Caco-2 (cell line): ENCODE measurements at regions of chr16 and their contacts with region 1.

Region 1: DNA sequence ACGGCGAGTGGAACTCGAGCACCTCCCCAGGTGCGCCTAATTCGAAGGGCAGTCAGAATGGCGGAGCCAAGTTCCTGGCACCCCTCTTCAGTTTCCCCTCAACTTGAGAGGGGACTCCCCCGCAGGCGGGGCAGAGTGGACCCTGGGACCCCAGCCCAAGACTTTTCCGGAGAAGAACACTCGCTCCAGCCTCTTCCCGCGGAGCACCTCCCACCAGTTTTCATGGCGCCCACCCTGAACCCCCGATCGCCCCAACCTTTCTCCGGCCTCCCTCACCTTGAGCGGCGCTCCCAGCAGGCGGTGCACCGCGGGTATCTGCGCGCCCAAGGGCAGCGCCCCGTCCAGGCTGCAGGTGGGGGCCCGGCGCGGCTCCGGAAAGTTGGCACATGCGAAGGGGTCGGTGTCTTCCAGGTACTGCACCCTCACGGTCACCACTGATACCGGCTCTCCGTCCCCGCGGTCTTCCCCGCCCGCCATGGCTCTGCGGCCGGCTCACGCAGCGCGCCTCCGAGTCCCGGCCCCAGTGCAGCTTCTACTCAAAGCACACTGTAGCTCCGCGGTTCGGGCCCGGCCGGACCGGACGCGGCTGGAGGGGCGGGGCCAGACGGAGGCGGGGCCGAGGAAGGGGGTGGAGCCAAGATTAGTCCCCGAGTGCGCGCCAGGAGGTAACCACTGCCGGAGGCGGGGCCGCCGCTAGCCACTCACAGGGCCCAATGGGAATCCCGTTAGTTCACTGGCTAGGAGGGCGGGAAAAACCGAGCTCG is at the start of gene FHOD1:
- DNase-seq: peak; percentile 98 to 99
- H3K4me3 ChIP-seq: peak within 1 kb of the TSS; percentile 72
- H3K4me3 Mint-ChIP-seq: peak within 1 kb of the TSS; percentile 95
- H3K27ac Mint-ChIP-seq: peak within 1 kb of the TSS; percentile 87
- H3K4me1 ChIP-seq: peaks cover 27% of the 10 kb centered on the region
- H3K4me1 Mint-ChIP-seq: peaks cover 42% of the 10 kb centered on the region
- H3K27me3 ChIP-seq: peaks cover 6% of the 10 kb centered on the region
- H3K27me3 Mint-ChIP-seq: peaks cover 18% of the 10 kb centered on the region
- CTCF ChIP-seq: peak in 1 of 2 experiments; percentile 36
- total RNA-seq, gene FHOD1: 59.1 and 69.0 TPM in 2 replicates

Region 2: DNA sequence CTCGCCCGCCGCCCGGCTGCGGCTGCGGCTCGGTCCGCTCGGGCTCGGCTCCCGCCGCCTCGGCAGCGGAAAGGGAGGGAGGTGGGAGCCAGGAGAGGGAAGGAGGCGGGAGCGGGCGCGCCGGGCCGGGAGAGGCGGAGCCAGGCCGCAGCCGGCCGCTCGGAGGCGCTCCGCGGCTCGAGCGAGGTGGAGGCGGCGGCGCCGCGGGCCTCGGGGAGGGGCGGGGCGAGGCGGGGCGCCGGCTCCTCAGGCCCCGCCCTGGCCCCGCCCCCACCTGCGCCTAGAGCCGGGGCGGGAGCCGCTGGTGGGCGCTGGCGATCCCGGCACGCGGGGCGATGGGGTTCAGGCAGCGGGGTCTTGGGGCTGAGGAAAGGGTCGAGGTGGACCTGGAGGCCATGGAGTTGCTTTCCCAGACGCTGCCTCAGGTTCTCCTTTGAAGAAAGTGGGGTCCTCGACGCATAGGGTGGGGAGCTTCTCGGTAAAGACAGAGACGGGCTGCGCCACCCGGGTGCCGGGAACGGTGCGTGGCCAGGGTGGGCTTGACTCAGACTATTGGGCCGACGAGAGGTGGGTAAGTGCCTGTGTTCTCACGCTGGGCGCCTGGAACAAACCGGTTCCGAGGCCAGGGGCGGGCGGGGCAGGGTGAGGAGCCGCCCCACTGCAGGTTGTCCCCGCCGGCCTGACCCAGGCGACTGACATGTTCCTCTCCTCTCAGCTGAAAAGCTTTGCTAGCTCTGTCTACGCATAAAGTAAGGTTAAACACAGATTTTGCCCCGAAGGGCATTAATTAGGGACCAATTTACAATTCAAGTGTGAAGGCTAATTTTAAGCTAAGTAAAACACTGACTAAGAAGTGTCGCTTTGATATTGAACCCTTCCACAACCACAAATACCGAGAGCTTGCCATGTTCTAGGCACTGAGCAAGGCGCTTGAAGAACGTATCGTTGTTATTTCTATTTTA is 550.2 kb before region 1 on chr16 and contains the start of gene CMTM4:
- CTCF ChIA-PET with region 1: no interaction called
- POLR2A ChIA-PET with region 1: no interaction called
- intact Hi-C with region 1: no loop called
- DNase-seq: peak; percentile 89 to 96
- H3K4me3 ChIP-seq: peak within 1 kb of the TSS; percentile 97
- H3K4me3 Mint-ChIP-seq: peak within 1 kb of the TSS; percentile 94
- H3K27ac Mint-ChIP-seq: peak within 1 kb of the TSS; percentile 78
- H3K4me1 ChIP-seq: peaks cover 17% of the 10 kb centered on the region
- H3K4me1 Mint-ChIP-seq: peaks cover 20% of the 10 kb centered on the region
- H3K27me3 ChIP-seq: no peaks in the 10 kb centered on the region
- H3K27me3 Mint-ChIP-seq: no peaks in the 10 kb centered on the region
- CTCF ChIP-seq: peak in 1 of 2 experiments; percentile 47
- total RNA-seq, gene CMTM4: 106 and 108 TPM in 2 replicates

Region 3: GRCh38 chr16:67149276-67150046 is 97.7 kb before region 1 on chr16:
- CTCF ChIA-PET with region 1: no interaction called
- POLR2A ChIA-PET with region 1: no interaction called
- intact Hi-C with region 1: no loop called
- DNase-seq: no peak
- H3K4me3 ChIP-seq: no peak overlapping the region
- H3K4me3 Mint-ChIP-seq: peak overlapping the region; percentile 47
- H3K27ac Mint-ChIP-seq: no peak overlapping the region
- H3K4me1 ChIP-seq: no peaks in the 10 kb centered on the region; the same call in none of the 2 replicates
- H3K4me1 Mint-ChIP-seq: no peaks in the 10 kb centered on the region
- H3K27me3 ChIP-seq: no peaks in the 10 kb centered on the region
- H3K27me3 Mint-ChIP-seq: no peaks in the 10 kb centered on the region
- CTCF ChIP-seq: no peak

Region 4: GRCh38 chr16:67191995-67192681 is 55.0 kb before region 1 on chr16 and contains the start of gene E2F4:
- CTCF ChIA-PET with region 1: interaction called, 24 read pairs
- POLR2A ChIA-PET with region 1: interaction called, 3 read pairs
- intact Hi-C with region 1: loop called (anchors 2 kb)
- DNase-seq: peak; percentile 92 to 94
- H3K4me3 ChIP-seq: peak within 1 kb of the TSS; percentile 90
- H3K4me3 Mint-ChIP-seq: peak within 1 kb of the TSS; percentile 77
- H3K27ac Mint-ChIP-seq: peak within 1 kb of the TSS; percentile 54
- H3K4me1 ChIP-seq: peaks cover 20% of the 10 kb centered on the region
- H3K4me1 Mint-ChIP-seq: peaks cover 24% of the 10 kb centered on the region
- H3K27me3 ChIP-seq: no peaks in the 10 kb centered on the region
- H3K27me3 Mint-ChIP-seq: no peaks in the 10 kb centered on the region
- CTCF ChIP-seq: no peak
- total RNA-seq, gene E2F4: 113 and 115 TPM in 2 replicates

Region 5: GRCh38 chr16:67198238-67198734 is 48.8 kb before region 1 on chr16:
- CTCF ChIA-PET with region 1: interaction called, 24 read pairs
- POLR2A ChIA-PET with region 1: interaction called, 4 read pairs
- intact Hi-C with region 1: loop called (anchors 2 kb)
- DNase-seq: peak in 1 of 2 experiments; percentile 53
- H3K4me3 ChIP-seq: 0 out of 2 replicates have a peak overlapping the region, but pooled peaks have one; percentile 11
- H3K4me3 Mint-ChIP-seq: peak overlapping the region; percentile 84
- H3K27ac Mint-ChIP-seq: no peak overlapping the region
- H3K4me1 ChIP-seq: peaks cover 27% of the 10 kb centered on the region
- H3K4me1 Mint-ChIP-seq: peaks cover 23% of the 10 kb centered on the region
- H3K27me3 ChIP-seq: no peaks in the 10 kb centered on the region
- H3K27me3 Mint-ChIP-seq: no peaks in the 10 kb centered on the region
- CTCF ChIP-seq: peak; percentile 40 to 58

Region 6: GRCh38 chr16:67226804-67227557 is 20.1 kb before region 1 on chr16 and contains the start of gene TMEM208:
- CTCF ChIA-PET with region 1: interaction called, 31 read pairs
- POLR2A ChIA-PET with region 1: interaction called, 55 read pairs
- intact Hi-C with region 1: loop called (anchors 1 kb)
- DNase-seq: peak; percentile 100
- H3K4me3 ChIP-seq: peak within 1 kb of the TSS; percentile 96
- H3K4me3 Mint-ChIP-seq: peak within 1 kb of the TSS; percentile 98
- H3K27ac Mint-ChIP-seq: peak within 1 kb of the TSS; percentile 98
- H3K4me1 ChIP-seq: peaks cover 7% of the 10 kb centered on the region; the same call in 1 of the 2 replicates
- H3K4me1 Mint-ChIP-seq: peaks cover 20% of the 10 kb centered on the region
- H3K27me3 ChIP-seq: no peaks in the 10 kb centered on the region
- H3K27me3 Mint-ChIP-seq: no peaks in the 10 kb centered on the region
- CTCF ChIP-seq: peak in 1 of 2 experiments; percentile 28
- total RNA-seq, gene TMEM208: 63.8 and 69.7 TPM in 2 replicates

Region 7: DNA sequence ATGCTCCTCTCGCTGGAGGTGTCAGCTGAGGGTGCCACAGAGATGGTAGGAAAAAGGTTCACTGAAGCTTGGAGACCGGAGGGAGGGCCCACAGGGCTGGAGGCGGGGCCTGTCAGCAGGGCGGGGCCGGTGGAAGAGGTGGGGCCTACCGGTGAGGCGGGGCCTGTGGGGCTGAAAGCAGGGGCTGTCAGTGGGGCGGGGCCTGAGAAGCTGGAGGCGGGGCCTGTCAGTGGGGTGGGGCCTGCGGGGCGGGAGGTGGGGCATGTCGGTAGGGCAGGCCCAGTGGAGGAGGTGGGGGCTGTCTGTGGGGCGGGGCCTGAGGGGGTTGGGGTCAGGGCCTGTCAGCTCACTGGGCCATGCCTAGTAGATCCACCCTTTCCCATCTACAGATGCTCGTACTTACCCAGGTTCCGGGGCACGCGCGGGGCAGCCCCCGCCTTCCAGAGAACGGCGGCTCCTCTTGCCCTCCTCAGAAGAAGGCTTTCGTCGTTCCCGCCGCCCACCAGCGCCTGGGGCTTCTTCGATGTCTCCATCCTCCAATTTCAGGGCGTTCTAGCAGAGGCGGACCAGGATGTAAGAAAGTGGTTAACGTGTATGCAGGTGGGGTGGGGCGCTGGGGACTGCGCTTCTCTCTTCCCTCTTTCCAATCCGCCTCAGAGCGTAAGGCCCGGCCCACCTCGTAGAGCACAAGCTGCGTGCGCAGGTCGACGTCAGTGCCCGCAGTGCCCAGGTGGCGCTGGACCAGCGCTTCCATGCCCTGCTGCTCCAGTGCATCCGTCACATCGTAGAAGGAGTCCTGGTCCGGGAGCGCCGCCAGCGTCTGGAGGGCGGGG is 10.3 kb before region 1 on chr16:
- CTCF ChIA-PET with region 1: interaction called, 19 read pairs
- POLR2A ChIA-PET with region 1: interaction called, 5 read pairs
- intact Hi-C with region 1: no loop called
- DNase-seq: peak; percentile 81 to 85
- H3K4me3 ChIP-seq: no peak overlapping the region
- H3K4me3 Mint-ChIP-seq: no peak overlapping the region
- H3K27ac Mint-ChIP-seq: peak overlapping the region; percentile 33
- H3K4me1 ChIP-seq: peaks cover 16% of the 10 kb centered on the region
- H3K4me1 Mint-ChIP-seq: peaks cover 8% of the 10 kb centered on the region
- H3K27me3 ChIP-seq: no peaks in the 10 kb centered on the region
- H3K27me3 Mint-ChIP-seq: no peaks in the 10 kb centered on the region
- CTCF ChIP-seq: no peak